ENCODE measurements at regions of chr9 and their contacts with region 1.

Region 1: GRCh38 chr9:92607773-92608172 is 62.2 kb downstream of the IPPK start:
- DNase-seq: no peak
- ATAC-seq: no peak

Region 2: DNA sequence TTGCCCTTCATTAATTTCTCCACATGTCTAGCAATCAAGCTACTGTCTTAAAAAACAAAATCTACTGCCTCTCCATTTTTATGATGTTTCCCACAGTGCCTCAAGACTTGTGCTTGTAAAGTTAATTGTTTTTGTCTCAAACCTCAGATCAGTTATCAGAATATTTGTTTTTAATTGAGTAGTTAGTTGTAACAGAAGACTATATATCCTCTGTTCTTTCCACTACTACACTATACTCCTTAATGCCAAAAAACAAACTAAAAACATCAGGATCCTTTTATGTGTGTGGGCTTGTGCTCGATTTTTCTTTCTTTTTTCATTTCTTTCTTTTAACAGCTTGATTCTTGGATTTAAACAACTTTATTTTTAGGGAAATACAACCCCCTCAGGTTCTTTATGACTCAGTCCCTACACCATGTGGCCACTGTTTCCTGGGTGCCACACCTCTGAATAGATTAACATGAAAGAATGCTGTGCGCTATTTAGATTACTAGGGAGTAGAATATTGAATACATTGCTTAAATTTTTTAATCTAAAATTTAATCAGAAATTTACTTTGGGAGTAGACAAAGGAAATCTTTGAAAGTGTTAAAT is 126.6 kb before region 1 on chr9:
- intact Hi-C with region 1: loop called (anchors 5 kb)
- DNase-seq: no peak
- ATAC-seq: no peak

Region 3: DNA sequence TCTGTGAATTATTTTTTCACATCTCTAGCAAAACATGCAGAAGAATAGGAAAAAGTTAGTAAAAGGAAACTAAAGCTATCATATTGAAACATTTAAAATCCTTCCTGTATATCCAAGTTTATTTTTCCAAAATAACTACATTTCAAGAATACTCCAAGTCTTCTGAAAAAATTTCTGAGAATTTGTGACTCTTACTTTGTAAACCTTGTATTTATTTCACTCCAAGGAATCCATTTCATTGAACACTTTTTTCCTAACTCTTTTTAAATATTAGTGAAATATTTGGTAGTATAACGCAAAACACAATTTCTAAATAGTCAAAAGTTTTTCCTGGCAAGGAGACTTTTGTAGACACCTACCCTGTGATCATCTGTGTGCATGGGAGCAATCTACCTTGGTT is 91.3 kb before region 1 on chr9:
- intact Hi-C with region 1: no loop called
- DNase-seq: no peak
- ATAC-seq: no peak

Region 4: DNA sequence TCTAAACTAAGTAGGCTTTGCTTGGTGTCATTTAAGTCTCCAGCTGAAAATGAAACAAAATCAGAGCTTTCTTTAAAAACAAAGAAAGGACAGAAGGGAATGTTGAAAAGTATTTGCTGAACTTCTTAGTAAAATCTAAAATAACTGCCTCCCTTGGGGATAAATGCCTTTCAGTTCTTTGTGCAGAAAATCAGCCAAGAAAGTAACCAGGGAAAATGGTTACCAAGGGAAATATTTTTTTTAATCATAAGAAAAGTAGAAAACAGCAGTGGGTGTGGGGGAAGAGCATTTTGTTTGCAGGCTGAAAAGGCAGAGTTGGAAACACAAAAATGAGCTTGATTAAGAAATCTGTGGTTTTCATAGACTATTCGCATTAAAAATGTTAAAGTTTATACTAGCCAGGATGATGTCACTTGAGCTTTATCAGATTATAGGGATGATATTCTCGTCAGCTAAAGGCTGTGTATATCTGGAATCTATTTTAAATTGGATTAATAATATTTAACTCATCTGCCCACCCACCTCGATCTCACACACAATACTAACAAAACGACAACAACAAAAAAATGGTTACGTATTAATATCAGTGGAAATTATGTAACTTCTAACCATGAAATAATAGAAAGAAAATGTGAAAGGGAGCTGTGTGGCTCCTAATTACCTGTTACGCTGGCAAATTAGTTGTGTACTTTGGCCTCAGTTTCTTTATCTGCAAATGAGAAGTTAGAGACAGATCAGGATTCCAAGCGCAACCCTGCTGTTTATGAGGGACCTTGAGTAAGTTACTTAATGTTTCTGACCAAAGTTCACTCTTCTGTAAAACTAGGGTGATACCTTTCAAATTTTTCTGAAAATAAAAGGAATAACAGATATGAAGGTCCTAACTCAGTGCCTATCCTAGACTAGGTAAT is 71.6 kb before region 1 on chr9 and contains the start of gene ECM2:
- intact Hi-C with region 1: loop called (anchors 10 kb)
- DNase-seq: no peak
- ATAC-seq: peak; percentile 23
- total RNA-seq, gene ECM2: 8.5 TPM

Region 5: GRCh38 chr9:92877531-92878430 is 270.0 kb after region 1 on chr9 and contains the start of gene ZNF484:
- intact Hi-C with region 1: no loop called
- DNase-seq: peak; percentile 99
- ATAC-seq: peak; percentile 100
- total RNA-seq, gene ZNF484: 4.3 TPM

Measured in Right ventricle myocardium inferior (tissue), 1 donor.